AG04449 (cell line): ENCODE measurements at regions of chr9 and their contacts with region 1.

Region 1: GRCh38 chr9:135864447-135865049 is 42.8 kb downstream of the CAMSAP1 start:
- DNase-seq: no peak
- H3K4me3 ChIP-seq: no peak overlapping the region
- CTCF ChIP-seq: peak; percentile 80

Region 2: GRCh38 chr9:135819905-135820304 is 44.6 kb before region 1 on chr9:
- CTCF ChIA-PET with region 1: no interaction called
- POLR2A ChIA-PET with region 1: no interaction called
- DNase-seq: no peak
- H3K4me3 ChIP-seq: no peak overlapping the region
- CTCF ChIP-seq: no peak

Region 3: GRCh38 chr9:135848341-135849047 is 16.1 kb before region 1 on chr9:
- CTCF ChIA-PET with region 1: interaction called, 25 read pairs
- POLR2A ChIA-PET with region 1: no interaction called
- DNase-seq: no peak
- H3K4me3 ChIP-seq: no peak overlapping the region
- CTCF ChIP-seq: no peak

Region 4: GRCh38 chr9:135877776-135878527 is 13.4 kb after region 1 on chr9:
- CTCF ChIA-PET with region 1: interaction called, 54 read pairs
- POLR2A ChIA-PET with region 1: no interaction called
- DNase-seq: no peak
- H3K4me3 ChIP-seq: no peak overlapping the region
- CTCF ChIP-seq: no peak

Region 5: GRCh38 chr9:135884328-135885035 is 19.9 kb after region 1 on chr9:
- CTCF ChIA-PET with region 1: interaction called, 14 read pairs
- POLR2A ChIA-PET with region 1: no interaction called
- DNase-seq: no peak
- H3K4me3 ChIP-seq: no peak overlapping the region
- CTCF ChIP-seq: no peak

Region 6: DNA sequence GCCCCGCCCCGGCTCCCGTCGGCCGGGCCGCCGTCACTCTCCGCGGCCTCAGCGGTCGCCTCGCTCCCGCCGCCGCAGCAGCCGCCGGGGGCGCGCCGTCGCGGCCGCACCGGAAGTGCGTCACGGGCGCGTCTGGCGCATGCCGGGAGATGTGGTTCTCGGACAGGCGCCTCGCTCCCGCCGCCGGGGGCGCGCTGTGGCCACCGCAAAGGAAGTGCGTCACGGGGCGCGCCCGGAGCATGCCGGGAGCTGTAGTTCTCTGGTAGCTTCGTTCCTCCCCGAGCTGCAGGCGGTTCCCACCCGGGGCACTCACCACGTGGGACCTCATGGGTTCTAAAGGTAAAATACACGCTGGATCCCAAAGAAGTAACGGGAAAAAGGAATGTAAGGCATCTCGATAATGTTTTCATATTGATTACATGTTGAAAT is 96.7 kb after region 1 on chr9 and contains the start of gene UBAC1:
- CTCF ChIA-PET with region 1: interaction called, 30 read pairs
- POLR2A ChIA-PET with region 1: no interaction called
- DNase-seq: peak; percentile 33
- H3K4me3 ChIP-seq: peak within 1 kb of the TSS; percentile 81
- CTCF ChIP-seq: peak; percentile 63